ENCODE measurements at regions of chr15 and their contacts with region 1.

Region 1: DNA sequence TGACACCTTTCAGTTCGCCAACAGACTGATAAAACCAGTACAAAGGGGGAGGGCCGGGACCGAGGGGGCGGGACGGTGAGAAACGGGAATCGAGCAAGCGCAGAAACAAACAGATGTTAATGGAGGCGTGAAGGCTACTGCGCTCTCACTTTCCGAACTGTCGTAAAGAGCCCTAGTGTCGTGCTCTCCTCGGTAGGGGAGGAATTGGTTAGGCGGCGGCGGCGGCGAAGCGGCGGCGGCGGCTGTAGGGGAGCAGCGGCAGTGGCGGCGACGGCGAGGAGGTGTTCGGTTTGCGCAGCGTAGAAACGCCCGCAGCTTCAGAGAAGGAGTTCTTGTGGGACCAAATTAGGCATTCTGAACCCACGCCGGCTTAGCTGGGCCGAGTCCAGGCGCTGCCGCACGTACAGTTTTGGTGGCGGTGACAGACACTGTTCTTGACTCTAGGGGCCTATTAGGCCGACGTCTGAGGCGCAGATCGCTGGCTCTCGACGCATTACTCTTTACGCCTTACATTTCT is at the start of gene RNF111:
- DNase-seq: peak; percentile 87 to 90
- ATAC-seq: peak; percentile 99
- H3K4me3 ChIP-seq: peak within 1 kb of the TSS; percentile 88 to 97 (median 92)
- H3K27ac ChIP-seq: peak within 1 kb of the TSS; percentile 91 to 98 (median 94)
- H3K4me1 ChIP-seq: peaks cover 16 to 35% of the 10 kb centered on the region in 2 donors
- H3K27me3 ChIP-seq: no peaks in the 10 kb centered on the region
- CTCF ChIP-seq: no peak
- POLR2A ChIP-seq: peak; percentile 82 to 85
- total RNA-seq, gene RNF111: 14.5 to 18.4 (median 15.8) TPM

Region 2: GRCh38 chr15:58933281-58934113 is 54.0 kb before region 1 on chr15 and contains the start of gene SLTM:
- in situ Hi-C with region 1: no loop called
- intact Hi-C with region 1: loop called (anchors 1 kb)
- DNase-seq: peak; percentile 85 to 94
- ATAC-seq: peak; percentile 87
- H3K4me3 ChIP-seq: peak within 1 kb of the TSS; percentile 73 to 95 (median 76)
- H3K27ac ChIP-seq: peak within 1 kb of the TSS; percentile 93 to 99 (median 96)
- H3K4me1 ChIP-seq: peaks cover 13 to 26% of the 10 kb centered on the region in 2 donors
- H3K27me3 ChIP-seq: no peaks in the 10 kb centered on the region
- CTCF ChIP-seq: peak in 4 of 5 experiments; percentile 13 to 43 (median 37)
- POLR2A ChIP-seq: peak; percentile 94 to 97
- total RNA-seq, gene SLTM: 46.5 to 76.2 (median 60.9) TPM

Region 3: DNA sequence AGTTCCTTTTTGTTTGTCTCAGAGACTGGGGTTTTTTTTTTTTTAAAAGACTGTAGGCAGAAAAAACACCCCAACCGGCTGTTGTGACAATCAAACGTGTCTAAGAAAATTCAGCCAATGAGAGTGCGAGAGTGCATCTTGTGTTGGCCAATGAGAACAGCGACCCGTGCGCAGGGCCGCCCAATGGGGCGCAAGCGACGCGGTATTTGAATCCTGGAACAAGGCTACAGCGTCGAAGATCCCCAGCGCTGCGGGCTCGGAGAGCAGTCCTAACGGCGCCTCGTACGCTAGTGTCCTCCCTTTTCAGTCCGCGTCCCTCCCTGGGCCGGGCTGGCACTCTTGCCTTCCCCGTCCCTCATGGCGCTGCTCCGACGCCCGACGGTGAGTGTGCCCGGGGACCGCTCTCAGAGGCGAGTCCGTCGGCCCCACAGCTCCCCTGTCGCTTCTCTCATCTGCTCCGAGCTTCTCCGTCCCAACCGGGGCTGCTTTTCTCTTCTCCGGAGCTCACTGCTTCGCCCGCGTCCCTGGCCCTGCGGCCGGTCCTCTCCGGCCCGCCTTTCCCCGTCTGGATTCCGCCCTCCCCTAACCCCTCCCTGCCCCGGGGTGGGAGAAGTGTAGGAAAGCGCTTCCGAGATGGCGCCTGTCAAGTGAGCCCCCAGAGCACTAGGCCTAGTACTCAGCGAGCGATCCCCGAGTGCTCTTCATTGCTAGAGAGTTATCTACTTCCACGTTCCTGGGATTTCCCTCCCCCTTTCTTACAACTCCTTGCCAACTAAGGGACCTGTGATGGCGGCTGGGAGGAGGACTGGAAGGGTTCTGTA is 117.6 kb after region 1 on chr15 and contains the start of gene CCNB2:
- in situ Hi-C with region 1: loop called in 1 of 4 experiments (anchors 10 kb)
- intact Hi-C with region 1: loop called (anchors 10 kb)
- DNase-seq: peak; percentile 70 to 83
- ATAC-seq: peak; percentile 94 to 98
- H3K4me3 ChIP-seq: peak within 1 kb of the TSS; percentile 50 to 84 (median 63)
- H3K27ac ChIP-seq: peak within 1 kb of the TSS in 3 of 4 donors; percentile 52 to 65 (median 64)
- H3K4me1 ChIP-seq: peaks cover 6 to 13% of the 10 kb centered on the region in 2 donors
- H3K27me3 ChIP-seq: no peaks in the 10 kb centered on the region
- CTCF ChIP-seq: no peak
- POLR2A ChIP-seq: no peak
- total RNA-seq, gene CCNB2: 0.33 to 0.62 TPM in 2 of 4 donors, not detected in the others

Region 4: DNA sequence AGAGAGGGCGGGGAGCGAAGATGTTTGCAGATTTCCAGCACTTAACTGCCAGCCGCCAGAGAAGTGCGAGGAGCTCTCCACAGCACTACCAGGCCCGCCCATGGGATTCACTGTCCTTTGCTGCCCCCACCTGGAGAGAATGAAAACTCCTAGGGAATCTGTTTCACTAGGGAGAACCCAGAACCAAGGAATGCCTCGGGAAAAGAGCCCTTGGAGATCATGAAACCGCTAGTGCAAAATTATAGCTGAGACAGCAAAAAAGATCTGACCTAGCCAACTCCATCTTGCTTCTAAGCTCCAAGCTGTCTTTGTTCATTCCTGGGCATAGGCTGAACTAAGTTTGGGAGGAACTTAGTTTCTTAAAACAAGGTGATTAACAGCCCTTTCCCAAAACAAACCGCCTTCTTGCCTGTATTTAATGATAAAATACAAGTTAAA is 541.4 kb after region 1 on chr15:
- in situ Hi-C with region 1: no loop called
- intact Hi-C with region 1: loop called (anchors 10 kb)
- DNase-seq: peak; percentile 48 to 62
- ATAC-seq: peak; percentile 93 to 98
- H3K4me3 ChIP-seq: no peak overlapping the region
- H3K27ac ChIP-seq: no peak overlapping the region
- H3K4me1 ChIP-seq: no peaks in the 10 kb centered on the region
- H3K27me3 ChIP-seq: peaks cover 0 to 7% (median 4%) of the 10 kb centered on the region in 3 donors
- CTCF ChIP-seq: peak; percentile 60 to 83 (median 70)
- POLR2A ChIP-seq: no peak